Sciatic nerve (tissue), 2 donors: ENCODE measurements at regions of chr9 and their contacts with region 1.

Region 1: DNA sequence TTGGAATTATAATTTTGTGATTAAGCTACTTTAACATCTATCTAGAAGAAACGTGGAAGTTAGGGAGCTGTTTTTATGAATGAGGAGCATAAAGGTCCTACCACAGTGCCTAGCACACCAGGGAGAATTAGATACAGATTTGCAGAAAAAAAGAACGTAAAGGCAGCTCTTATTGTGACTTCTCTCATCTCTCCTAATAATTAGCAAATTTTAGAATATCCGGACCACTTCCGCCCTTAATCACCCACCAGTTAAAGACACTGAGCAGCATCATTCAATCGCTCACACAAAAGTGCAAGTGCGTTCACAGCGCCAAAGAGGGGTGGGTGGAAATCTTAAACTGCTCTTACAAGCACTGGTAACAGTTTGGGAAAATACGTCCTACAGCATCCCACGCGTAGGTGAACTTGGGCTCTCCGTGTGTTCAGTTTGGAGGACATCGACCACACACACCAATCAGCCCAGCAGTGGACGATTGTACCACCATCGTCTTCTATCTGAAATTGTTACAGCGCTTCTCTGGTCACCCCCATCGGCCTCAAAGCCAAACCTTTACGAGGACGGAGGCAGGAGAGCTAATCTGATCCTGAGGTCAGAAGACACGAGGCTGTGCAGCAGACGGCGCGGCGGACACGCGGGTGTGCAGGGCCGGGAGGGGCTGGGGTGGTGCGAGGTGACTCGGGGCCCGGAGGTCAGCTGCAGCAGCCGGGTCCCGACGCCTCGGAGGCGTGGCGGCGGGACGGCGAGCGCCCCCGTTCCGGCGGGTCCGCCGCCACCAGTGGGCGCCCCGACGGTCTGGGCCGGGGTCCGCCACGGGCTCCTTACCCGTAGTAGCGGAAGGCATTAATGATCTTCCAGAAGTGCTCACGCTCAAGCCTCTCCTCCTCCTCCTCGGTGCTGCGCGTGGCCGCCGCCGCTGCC is 646 bp downstream of the CARNMT1 start:
- DNase-seq: peak; percentile 74
- ATAC-seq: peak; percentile 66

Region 2: DNA sequence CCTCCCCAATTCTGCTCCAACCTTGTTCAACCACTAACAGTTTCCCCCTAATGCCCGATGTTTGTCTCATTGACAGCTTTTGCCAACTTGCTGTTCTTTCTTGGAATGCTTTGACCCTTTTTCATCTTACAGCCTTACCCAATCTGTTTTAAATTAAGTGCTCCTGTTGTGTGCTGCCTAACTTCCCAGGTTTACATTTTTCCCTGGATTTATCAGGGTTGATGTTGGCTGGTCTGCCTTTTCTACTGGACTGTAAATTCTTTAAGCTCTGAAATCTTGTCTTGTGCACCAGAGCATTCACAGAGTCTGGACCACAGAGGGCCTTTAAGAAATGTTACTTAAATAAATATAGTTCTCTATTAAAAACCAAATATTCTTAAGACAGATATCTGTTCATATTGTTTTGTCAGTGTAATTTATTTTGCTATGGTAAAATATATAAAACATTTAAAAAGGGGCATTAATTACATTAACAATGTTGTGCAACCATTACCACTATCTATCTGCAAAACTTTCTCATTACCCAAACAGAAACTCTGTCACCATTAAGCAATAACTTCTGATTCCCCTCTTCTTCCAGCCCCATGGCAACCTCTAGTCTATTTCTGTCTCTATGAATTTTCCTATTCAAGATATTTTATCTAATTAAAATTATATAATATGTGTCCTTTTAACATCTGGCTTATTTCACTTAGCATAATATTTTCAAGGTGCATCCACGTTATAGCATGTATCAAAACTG is 133.8 kb after region 1 on chr9:
- intact Hi-C with region 1: no loop called
- DNase-seq: no peak
- ATAC-seq: no peak

Region 3: DNA sequence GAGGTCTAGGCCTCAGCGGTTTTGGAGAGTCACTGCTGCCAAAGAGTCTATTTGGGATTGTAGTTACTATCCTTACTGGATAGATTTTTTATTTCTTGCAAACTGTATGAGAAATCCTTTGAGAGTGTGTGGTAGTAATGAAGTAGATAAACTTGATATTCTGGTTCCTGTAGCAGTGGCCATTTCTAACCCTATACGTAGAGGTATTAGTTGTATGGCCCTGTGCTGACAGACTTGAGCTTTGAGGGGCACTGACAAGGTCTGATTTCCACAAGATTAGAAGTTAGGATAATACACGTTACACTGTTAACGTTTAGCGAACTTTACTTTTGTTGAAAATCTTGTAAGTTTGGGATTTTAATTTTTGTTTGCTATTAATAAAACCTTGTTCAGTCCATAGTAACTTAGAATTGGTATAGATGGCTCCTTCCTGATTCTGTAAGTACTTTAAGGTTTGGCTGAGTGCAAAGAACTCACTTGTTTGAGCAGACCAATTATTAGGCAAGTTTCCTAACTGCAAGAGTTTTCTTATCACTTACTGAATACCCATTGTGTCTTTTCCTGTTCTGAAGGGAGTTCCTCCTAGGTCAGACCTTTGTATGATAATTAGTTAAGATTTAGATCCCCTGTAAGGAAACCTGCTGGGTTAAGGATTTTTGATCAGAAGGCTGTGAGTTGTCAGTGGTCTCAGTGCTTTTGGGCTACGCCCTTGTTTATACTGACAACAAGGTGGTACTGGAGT is 1463.0 kb after region 1 on chr9:
- intact Hi-C with region 1: loop called (anchors 5 kb)
- DNase-seq: no peak
- ATAC-seq: no peak